Common myeloid progenitor, CD34-positive (primary cell): ENCODE measurements at regions of chr7 and their contacts with region 1.

Region 1: DNA sequence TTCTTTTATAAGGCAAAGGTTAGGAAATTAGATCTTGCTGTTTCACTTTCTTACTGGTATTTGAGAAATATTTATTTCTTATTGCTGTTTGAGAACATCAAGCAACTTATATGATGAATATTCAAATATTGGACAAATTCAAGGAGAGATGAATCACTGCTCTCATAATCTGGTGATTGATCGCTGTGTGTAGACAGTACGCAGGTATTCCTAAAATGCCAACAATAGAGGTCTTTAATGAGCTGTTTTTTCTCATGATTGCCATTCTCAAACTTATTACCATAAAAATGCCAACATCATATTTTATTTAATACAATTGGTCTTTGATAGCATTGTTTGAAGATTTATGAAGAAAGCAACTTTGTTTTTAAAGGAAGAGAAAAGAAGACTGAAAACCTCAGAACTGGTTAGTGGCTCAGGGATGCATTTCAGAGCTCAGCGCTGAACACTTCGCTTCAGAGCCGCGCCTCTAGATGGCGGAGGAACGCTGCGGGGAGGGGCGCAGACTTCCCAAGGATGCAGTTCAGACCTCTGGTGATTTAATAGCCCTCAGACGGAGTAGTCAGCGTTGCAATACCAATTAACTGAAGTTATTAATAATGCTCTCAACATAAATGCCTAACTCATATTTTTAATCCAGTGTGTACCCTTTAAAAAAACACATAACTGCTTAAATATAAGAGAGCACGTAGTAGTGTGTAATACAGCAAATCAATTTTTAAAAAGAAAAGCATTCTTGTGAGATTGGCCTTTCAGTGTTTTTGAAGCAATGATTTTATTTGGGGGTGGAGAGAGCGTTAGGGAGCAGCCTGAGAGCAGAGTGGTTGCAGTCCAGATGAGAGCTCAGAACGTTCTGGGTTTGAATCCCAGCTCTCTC is 38.5 kb upstream of the STEAP4 start:
- DNase-seq: peak; percentile 29 to 60 (median 52)
- H3K4me3 ChIP-seq: no peak overlapping the region
- H3K27ac ChIP-seq: no peak overlapping the region
- H3K4me1 ChIP-seq: no peaks in the 10 kb centered on the region
- H3K27me3 ChIP-seq: no peaks in the 10 kb centered on the region

Region 2: GRCh38 chr7:88357781-88358525 is 12.8 kb after region 1 on chr7:
- CTCF ChIA-PET with region 1: interaction called, 40 read pairs
- POLR2A ChIA-PET with region 1: no interaction called
- DNase-seq: peak in 2 of 3 donors; percentile 35 to 46
- H3K4me3 ChIP-seq: peak overlapping the region in 1 of 7 experiments; percentile 29
- H3K27ac ChIP-seq: no peak overlapping the region
- H3K4me1 ChIP-seq: peaks cover 0 to 18% (median 9%) of the 10 kb centered on the region in 4 experiments
- H3K27me3 ChIP-seq: no peaks in the 10 kb centered on the region